OCI-LY7 (cell line): ENCODE measurements at regions of chr1 and their contacts with region 1.

Region 1: GRCh38 chr1:228073857-228074545 is 8.5 kb upstream of the ARF1 start:
- DNase-seq: peak; percentile 40
- H3K4me3 ChIP-seq: no peak overlapping the region
- H3K27ac ChIP-seq: no peak overlapping the region
- H3K4me1 ChIP-seq: no peaks in the 10 kb centered on the region
- CTCF ChIP-seq: peak; percentile 61

Region 2: DNA sequence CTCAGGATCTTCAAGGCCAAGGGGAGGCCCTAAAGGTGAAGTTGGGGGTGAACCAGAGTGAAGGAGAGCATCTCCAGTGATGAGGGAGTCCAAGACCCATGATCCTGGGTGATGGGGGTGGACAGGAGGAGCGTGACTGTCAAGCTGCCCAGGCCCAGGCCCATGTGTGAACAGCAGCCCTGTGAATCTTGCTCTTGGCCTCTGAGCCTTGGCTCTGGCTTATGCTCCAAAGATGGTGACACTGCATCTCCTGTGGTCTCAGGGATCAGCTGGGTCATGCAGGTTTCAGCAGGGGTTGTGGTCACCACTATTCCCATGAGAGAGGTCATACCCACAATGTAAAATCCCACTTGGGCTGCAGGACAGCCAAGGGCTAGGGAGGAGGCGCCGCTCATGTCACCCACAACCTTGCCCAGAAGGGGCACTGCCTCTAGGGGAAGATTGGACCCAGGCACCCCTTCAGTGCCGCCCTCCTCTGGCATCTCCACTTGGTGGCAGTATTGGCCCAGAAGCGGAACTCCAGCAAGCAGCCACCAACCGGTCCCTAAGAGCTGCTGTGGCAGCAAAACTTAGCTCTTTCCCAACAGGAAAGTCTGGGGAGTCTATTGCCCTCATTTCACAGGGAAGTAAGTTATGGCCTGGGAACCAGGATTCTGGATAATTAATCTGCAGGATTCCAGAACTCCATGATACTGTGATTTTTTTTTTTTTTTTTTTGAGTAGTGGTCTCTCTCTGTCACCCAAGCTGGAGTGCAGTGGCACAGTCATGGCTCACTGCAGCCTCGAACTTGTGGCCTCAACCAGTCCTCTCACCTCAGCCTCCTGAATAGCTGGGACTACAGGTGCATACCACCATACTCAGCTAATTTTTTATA is 74.7 kb before region 1 on chr1:
- CTCF ChIA-PET with region 1: no interaction called
- POLR2A ChIA-PET with region 1: no interaction called
- intact Hi-C with region 1: loop called (anchors 1 kb)
- DNase-seq: peak; percentile 76
- H3K4me3 ChIP-seq: no peak overlapping the region
- H3K27ac ChIP-seq: no peak overlapping the region
- H3K4me1 ChIP-seq: no peaks in the 10 kb centered on the region
- CTCF ChIP-seq: peak; percentile 91